ENCODE measurements at regions of chr5 and their contacts with region 1.

Region 1: DNA sequence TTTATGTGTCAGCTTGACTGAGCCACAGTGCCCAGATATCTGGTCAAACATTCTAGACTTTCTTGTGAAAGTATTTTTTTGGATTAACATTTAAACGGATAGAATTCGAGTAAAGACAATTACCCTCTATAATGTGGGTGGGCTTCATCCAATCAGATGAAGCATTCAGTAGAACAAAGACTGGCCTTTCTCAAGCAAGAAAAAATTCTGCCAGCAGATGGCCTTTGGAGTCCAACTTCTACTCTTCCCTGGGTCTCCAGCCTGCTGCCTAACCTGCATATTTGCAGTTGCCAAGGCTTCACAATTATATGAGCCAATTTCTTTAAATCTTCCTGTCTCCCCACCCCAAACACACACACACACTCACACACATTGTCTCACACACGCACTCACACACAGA is 86.4 kb downstream of the MED10 start:
- DNase-seq: no peak

Region 2: DNA sequence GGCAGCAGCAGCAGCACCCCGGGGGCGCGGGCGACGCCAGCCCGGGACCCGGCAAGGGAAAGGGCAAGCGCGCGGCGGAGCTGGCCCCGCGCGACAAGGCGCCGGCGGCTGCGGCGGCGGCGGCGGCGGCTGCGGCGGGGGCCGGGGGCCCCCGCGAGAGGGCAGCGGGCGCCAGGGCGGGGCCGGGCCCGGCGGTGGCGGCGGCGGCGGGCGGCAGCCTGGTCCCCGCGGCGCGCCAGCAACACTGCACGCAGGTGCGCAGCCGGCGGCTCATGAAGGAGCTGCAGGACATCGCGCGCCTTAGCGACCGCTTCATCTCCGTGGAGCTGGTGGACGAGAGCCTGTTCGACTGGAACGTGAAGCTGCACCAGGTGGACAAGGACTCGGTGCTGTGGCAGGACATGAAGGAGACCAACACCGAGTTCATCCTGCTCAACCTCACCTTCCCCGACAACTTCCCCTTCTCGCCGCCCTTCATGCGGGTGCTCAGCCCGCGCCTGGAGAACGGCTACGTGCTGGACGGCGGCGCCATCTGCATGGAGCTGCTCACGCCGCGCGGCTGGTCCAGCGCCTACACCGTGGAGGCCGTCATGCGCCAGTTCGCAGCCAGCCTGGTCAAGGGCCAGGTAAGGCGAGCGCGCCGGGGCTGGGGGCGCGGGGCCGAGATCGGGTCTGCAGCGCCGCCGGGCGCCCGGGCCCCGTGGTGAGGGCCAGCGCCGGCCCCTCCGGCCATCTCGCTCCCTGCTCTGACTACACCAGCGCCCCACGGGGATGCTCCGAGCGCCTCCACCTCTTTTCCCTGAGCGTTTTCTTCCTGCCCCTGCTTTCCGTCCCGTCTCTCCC is 156.9 kb after region 1 on chr5 and contains the start of gene UBE2QL1:
- intact Hi-C with region 1: loop called (anchors 5 kb)
- DNase-seq: peak; percentile 69
- total RNA-seq, gene UBE2QL1: 13.1 TPM

Region 3: DNA sequence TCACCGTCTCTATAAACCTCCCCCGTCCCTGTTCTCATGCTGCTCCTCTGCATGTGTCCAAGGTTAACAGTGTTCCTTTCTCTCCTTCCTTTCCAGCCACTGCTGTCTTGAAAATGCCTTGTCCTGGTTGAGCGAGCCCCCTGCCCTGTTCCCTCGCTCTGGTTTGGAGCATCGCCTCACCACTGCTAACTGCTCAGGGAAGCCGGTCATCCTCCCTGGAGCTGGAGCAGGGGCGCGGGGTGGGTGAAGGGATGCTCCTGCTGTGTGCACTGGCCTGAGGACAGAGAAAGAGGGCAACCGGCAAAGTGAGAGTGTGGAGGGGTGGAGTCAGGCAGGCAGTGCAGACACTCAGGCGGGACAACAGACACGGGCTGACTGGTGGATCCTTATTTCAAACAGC is 176.1 kb after region 1 on chr5:
- intact Hi-C with region 1: no loop called
- DNase-seq: peak; percentile 74

Region 4: DNA sequence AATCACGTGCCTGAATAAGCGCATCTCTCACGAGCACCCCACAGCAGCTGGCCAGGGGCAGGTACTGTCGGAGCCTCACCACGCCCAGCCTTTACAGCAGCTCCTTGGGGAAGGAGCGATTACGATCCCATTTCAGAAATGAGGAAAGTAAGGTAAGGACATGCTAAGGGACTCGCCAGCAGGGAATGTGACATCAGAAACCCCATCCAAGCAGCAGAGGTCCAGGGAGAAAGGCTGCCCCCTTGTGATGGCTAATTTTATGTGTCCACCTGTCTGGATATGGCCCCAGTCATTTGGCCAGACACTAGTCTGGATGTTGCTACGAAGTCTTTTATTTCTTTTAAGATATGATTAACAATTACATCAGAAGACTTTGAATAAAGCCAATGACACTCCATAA is 233.9 kb after region 1 on chr5:
- intact Hi-C with region 1: loop called (anchors 5 kb)
- DNase-seq: no peak

Region 5: GRCh38 chr5:6937675-6938074 is 645.7 kb after region 1 on chr5:
- intact Hi-C with region 1: no loop called
- DNase-seq: no peak

Measured in cardiac septum (tissue), 1 donor.